Motor neuron (in vitro differentiated cells): ENCODE measurements at regions of chr12 and their contacts with region 1.

Region 1: DNA sequence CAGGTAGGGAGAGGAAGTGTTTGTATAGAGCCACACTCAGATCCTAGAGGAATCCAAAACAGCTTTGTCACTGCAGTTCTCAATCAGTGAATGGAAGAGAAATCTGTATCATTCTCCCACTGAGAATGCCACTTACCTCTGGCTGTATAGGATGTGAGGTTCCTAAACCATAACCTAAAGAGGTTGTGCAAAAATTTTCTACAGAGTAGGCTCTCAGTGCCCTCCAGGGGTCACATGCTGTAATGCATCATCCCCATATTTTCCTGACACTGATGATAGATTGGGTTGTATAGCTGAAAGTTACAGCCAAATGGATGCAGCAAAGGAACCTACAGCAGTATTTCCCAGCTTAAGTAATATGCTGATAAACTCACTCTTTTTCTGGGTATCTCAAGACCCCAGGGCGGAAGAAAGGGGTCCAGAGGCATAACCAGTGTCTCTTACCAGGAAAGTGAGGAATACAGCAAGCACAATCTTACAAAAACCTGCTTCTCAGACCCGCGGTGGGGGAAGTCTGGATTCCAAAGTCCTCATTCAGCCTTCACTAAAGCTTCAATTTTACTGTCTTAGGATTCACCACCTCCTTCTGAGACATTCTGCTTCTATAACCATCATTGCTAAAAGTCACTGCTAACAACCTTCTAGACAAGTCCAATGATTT is 3.8 kb downstream of the BCDIN3D start:
- ATAC-seq: peak in 2 of 8 experiments; percentile 12 to 14
- H3K4me3 ChIP-seq: no peak overlapping the region
- H3K27ac ChIP-seq: no peak overlapping the region
- H3K4me1 ChIP-seq: peaks cover 12 to 13% of the 10 kb centered on the region in 2 donors

Region 2: GRCh38 chr12:49776413-49776812 is 62.7 kb before region 1 on chr12:
- in situ Hi-C with region 1: loop called in 1 of 9 experiments (anchors 10 kb)
- ATAC-seq: peak; percentile 68 to 98 (median 88)
- H3K4me3 ChIP-seq: no peak overlapping the region
- H3K27ac ChIP-seq: no peak overlapping the region
- H3K4me1 ChIP-seq: peaks cover 3 to 7% of the 10 kb centered on the region in 2 donors